HEK293T (cell line): ENCODE measurements at regions of chr6 and their contacts with region 1.

Region 1: DNA sequence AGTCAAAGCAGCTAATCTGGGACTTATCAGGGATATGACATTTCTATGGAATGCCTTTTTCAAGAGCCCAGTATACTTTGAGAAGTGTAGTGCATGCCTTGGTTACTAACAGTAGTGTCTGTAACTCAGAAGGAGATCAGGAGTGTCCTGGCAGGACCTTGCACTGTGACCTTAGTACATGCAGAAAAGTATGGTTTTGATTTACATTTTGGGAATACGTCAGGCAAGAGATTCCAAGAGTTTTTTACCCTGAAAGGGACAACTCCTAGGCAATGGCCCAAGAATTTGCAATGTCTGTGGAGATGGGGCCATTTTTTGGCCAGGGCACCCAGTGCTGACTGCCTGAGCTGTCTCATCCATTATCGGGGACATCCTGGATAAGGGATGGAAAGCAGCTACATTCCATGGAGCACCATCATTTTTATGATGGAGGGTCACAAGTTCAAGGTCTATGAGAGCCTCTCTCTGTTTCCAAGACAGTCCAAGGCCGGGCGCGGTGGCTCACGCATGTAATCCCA is 80.2 kb downstream of the FAM50B start:
- DNase-seq: no peak

Region 2: GRCh38 chr6:3759646-3760232 is 169.6 kb before region 1 on chr6:
- CTCF ChIA-PET with region 1: no interaction called
- POLR2A ChIA-PET with region 1: no interaction called
- DNase-seq: no peak

Region 3: GRCh38 chr6:3913077-3913957 is 16.0 kb before region 1 on chr6:
- CTCF ChIA-PET with region 1: interaction called, 10 read pairs
- POLR2A ChIA-PET with region 1: no interaction called
- DNase-seq: peak; percentile 23